Thyroid gland (tissue), 4 donors: ENCODE measurements at regions of chr2 and their contacts with region 1.

Region 1: GRCh38 chr2:69643602-69644505 is at the start of gene AAK1:
- DNase-seq: peak; percentile 92 to 93
- H3K4me3 ChIP-seq: peak within 1 kb of the TSS; percentile 57 to 96 (median 93)
- H3K27ac ChIP-seq: peak within 1 kb of the TSS; percentile 96 to 99 (median 98)
- H3K4me1 ChIP-seq: peaks cover 19 to 39% of the 10 kb centered on the region in 2 donors
- H3K27me3 ChIP-seq: no peaks in the 10 kb centered on the region
- CTCF ChIP-seq: peak in 1 of 6 experiments; percentile 4
- POLR2A ChIP-seq: peak; percentile 22 to 96
- total RNA-seq, gene AAK1: 82.0 to 174 (median 144) TPM

Region 2: GRCh38 chr2:69565431-69565839 is 78.4 kb before region 1 on chr2:
- intact Hi-C with region 1: loop called (anchors 10 kb)
- DNase-seq: peak; percentile 45 to 51
- H3K4me3 ChIP-seq: no peak overlapping the region
- H3K27ac ChIP-seq: peak overlapping the region in 2 of 3 donors; percentile 81 to 93
- H3K4me1 ChIP-seq: peaks cover 60 to 73% of the 10 kb centered on the region in 2 donors
- H3K27me3 ChIP-seq: no peaks in the 10 kb centered on the region
- CTCF ChIP-seq: peak; percentile 19 to 60 (median 46)
- POLR2A ChIP-seq: no peak

Region 3: DNA sequence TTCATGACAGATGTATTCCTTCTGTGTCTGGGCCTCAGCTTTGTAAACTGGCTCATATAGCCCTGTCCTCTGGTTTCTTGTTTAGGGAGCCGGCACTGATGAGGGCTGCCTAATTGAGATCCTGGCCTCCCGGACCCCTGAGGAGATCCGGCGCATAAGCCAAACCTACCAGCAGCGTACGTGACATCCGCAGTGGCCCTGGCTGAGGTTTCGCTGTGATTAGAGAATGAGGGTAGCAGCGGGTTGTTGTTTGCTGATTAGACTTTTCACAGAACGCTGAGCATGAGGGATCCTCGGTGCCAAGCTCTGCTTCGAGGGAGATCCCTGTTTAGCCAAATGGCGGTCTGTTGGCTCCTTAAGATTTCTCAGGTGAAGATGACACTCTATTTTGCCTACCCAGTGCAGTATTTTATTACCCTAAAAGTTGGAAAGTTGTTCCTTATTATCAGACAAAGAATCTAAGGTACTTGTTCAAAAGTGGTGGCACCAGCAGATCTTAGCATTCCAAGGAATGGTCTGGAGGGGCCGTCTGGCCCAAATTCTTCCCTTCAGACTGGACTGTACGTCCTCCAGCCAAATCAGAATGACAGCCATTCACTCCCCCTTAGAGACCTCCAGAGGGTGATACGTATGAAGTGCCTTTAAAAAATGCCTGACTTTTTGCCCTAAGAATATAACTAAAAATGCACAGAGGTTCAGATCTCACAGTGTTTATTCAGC is 164.1 kb after region 1 on chr2:
- intact Hi-C with region 1: no loop called
- DNase-seq: no peak
- H3K4me3 ChIP-seq: no peak overlapping the region
- H3K27ac ChIP-seq: no peak overlapping the region
- H3K4me1 ChIP-seq: no peaks in the 10 kb centered on the region
- H3K27me3 ChIP-seq: no peaks in the 10 kb centered on the region
- CTCF ChIP-seq: no peak
- POLR2A ChIP-seq: no peak